ENCODE measurements at regions of chr18 and their contacts with region 1.

Region 1: GRCh38 chr18:2547477-2548087 is 23.7 kb downstream of the METTL4 start:
- DNase-seq: peak in 2 of 3 donors; percentile 12 to 21
- H3K4me3 ChIP-seq: no peak overlapping the region
- H3K4me3 Mint-ChIP-seq: no peak overlapping the region
- H3K27ac ChIP-seq: no peak overlapping the region
- H3K27ac Mint-ChIP-seq: no peak overlapping the region
- H3K4me1 ChIP-seq: no peaks in the 10 kb centered on the region
- H3K4me1 Mint-ChIP-seq: no peaks in the 10 kb centered on the region
- H3K27me3 ChIP-seq: no peaks in the 10 kb centered on the region
- H3K27me3 Mint-ChIP-seq: no peaks in the 10 kb centered on the region
- CTCF ChIP-seq: peak; percentile 73

Region 2: GRCh38 chr18:864872-865273 is 1682.7 kb before region 1 on chr18:
- intact Hi-C with region 1: loop called in 1 of 2 experiments (anchors 10 kb)
- DNase-seq: peak; percentile 16 to 40 (median 16)
- H3K4me3 ChIP-seq: no peak overlapping the region
- H3K4me3 Mint-ChIP-seq: peak overlapping the region in 1 of 2 donors; percentile 30
- H3K27ac ChIP-seq: no peak overlapping the region
- H3K27ac Mint-ChIP-seq: no peak overlapping the region
- H3K4me1 ChIP-seq: no peaks in the 10 kb centered on the region
- H3K4me1 Mint-ChIP-seq: peaks cover 4% of the 10 kb centered on the region
- H3K27me3 ChIP-seq: peaks cover 0 to 13% of the 10 kb centered on the region in 2 donors
- H3K27me3 Mint-ChIP-seq: peaks cover 13 to 35% (median 18%) of the 10 kb centered on the region in 3 donors
- CTCF ChIP-seq: peak; percentile 87

Region 3: DNA sequence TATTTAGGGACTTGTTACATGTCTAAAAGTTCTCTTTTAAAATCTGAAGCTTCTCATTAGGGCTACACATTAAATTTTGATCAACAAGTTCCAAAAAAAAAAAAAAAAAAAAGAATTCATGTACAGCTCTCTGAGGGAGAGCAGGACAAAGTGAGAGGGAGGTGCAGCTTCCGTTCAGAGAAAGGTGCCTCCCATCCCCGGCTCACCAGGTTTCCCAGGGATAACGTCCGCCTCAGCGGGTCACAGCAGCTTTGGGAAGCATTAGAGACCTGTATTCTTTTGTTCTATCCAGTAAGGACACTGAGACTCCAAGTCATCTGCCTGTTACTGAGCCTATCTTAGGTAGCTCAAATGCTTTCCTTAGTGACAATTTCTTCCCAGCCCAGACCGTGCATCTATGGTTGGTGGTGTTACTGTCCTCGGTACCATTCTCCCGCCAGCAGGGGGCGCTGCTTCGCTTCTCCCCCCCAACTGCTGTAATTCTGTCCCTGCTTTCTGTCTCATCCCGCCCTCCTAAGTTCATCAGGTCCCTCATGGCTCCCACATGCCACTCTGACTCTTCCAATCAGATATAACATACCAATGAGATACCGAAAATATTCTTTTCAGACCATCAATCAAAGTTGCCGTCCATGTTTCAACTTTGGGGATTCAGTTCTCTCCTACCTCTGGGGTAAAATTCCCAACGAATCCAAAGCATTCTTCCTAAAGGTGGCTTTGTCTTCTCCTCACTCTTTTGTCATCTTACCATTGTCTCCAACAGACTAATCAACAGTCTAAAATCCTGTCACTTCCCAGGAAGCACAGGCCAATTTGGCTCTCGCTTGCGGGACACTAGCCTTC is 442.7 kb before region 1 on chr18:
- intact Hi-C with region 1: loop called (anchors 10 kb)
- DNase-seq: peak; percentile 11 to 34 (median 16)
- H3K4me3 ChIP-seq: no peak overlapping the region
- H3K4me3 Mint-ChIP-seq: no peak overlapping the region
- H3K27ac ChIP-seq: no peak overlapping the region
- H3K27ac Mint-ChIP-seq: no peak overlapping the region
- H3K4me1 ChIP-seq: no peaks in the 10 kb centered on the region
- H3K4me1 Mint-ChIP-seq: peaks cover 7% of the 10 kb centered on the region
- H3K27me3 ChIP-seq: no peaks in the 10 kb centered on the region
- H3K27me3 Mint-ChIP-seq: peaks cover 0 to 5% (median 0%) of the 10 kb centered on the region in 3 donors
- CTCF ChIP-seq: peak; percentile 92

Region 4: DNA sequence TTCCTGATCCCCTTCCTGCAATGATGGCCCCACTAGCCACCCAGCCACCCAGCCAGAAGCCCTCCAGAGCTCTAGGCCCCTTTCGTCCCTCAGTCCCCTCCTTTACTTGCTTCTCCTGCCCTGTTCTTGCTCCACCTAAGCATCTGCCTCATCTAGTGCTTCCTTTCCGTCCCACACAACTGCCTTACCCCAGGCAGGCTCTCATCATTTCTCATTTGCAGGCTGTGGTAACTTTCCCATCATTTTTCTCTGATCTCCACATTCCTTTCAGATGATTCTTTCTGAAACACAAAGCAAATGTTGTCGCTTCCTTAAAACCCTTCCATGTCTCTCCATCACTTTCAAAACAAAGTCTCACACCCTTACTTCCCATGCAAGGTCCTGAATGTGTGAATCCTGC is 436.1 kb before region 1 on chr18:
- intact Hi-C with region 1: loop called (anchors 10 kb)
- DNase-seq: no peak
- H3K4me3 ChIP-seq: no peak overlapping the region
- H3K4me3 Mint-ChIP-seq: no peak overlapping the region
- H3K27ac ChIP-seq: no peak overlapping the region
- H3K27ac Mint-ChIP-seq: peak overlapping the region in 1 of 7 donors; percentile 4
- H3K4me1 ChIP-seq: no peaks in the 10 kb centered on the region
- H3K4me1 Mint-ChIP-seq: no peaks in the 10 kb centered on the region
- H3K27me3 ChIP-seq: no peaks in the 10 kb centered on the region
- H3K27me3 Mint-ChIP-seq: peaks cover 2 to 25% (median 14%) of the 10 kb centered on the region in 3 donors
- CTCF ChIP-seq: no peak

Region 5: DNA sequence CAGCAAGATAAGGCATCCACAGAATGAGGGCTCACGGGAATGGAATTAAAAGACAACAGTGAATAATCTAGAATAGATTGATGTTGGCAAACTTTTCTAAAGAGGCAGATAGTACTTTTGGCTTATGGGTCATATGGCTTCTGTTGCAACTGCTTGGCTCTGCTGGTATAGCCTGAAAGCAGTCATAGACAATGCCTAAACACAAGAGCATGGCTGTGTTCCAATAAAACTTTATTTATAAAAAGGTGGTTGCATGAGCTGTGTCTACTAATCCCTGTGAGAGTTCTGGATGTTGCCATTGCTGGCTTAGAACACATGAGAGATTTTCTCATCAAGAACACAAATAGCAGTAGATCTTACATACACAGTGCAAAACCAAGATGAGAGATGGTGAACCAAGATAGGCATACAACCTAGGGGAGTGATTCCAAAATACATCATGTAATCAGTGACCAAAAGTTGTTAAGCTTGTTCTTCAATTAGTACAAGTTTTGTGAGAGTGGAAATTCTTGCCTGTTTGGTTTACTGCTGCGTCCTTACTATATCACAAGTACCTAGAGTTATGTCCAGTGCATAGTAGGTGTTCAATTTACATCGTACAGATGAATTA is 356.3 kb before region 1 on chr18:
- intact Hi-C with region 1: no loop called
- DNase-seq: no peak
- H3K4me3 ChIP-seq: no peak overlapping the region
- H3K4me3 Mint-ChIP-seq: no peak overlapping the region
- H3K27ac ChIP-seq: no peak overlapping the region
- H3K27ac Mint-ChIP-seq: no peak overlapping the region
- H3K4me1 ChIP-seq: no peaks in the 10 kb centered on the region
- H3K4me1 Mint-ChIP-seq: no peaks in the 10 kb centered on the region
- H3K27me3 ChIP-seq: no peaks in the 10 kb centered on the region
- H3K27me3 Mint-ChIP-seq: no peaks in the 10 kb centered on the region
- CTCF ChIP-seq: no peak

Region 6: GRCh38 chr18:2486426-2486825 is 61.2 kb before region 1 on chr18:
- intact Hi-C with region 1: no loop called
- DNase-seq: no peak
- H3K4me3 ChIP-seq: no peak overlapping the region
- H3K4me3 Mint-ChIP-seq: no peak overlapping the region
- H3K27ac ChIP-seq: no peak overlapping the region
- H3K27ac Mint-ChIP-seq: no peak overlapping the region
- H3K4me1 ChIP-seq: no peaks in the 10 kb centered on the region
- H3K4me1 Mint-ChIP-seq: no peaks in the 10 kb centered on the region
- H3K27me3 ChIP-seq: peaks cover 2 to 3% of the 10 kb centered on the region in 2 donors
- H3K27me3 Mint-ChIP-seq: peaks cover 5 to 11% (median 11%) of the 10 kb centered on the region in 3 donors
- CTCF ChIP-seq: no peak